ENCODE measurements at regions of chr11 and their contacts with region 1.

Region 1: DNA sequence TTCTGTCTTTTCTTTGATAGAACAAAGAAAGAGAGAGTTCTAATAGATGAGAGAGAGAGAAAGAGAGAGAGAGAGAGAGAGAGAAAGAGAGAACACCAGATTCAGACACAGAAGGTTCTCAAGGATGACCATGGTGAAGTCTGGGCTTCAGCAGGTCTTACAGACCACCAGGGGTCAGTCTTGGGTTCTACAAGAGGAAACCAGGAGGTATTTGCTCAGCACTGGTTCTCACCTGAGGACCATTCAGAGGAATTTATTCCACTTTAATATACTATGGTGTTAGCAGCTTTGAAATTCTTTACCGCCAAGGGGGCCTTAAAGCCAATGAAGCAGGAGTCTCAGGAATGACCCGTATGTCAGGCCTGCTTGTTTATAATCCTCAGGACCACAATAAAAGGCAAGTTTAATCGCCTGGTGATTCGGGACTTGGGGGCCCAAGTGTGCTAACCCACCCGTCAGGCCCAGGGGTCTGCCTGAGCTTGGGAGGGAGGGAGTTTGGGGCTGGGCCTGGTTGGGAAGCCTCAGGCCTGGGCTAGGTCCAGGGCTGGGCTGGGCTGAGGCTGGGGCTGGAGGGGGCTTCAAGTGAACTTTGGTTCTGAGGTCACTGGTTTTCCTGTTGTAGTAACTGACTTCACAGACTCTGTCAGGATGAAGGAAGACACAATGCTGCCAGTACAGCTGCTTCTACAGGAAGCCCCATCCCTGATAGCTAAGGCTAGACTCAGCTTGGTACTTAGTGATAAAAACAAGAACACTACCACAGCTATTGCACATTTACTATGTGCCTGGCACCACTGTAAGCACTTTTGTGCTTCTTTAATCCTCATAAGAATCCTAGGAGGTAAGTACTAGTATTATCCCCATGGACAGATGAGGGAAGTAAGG is 179.2 kb upstream of the ZBED5 start:
- DNase-seq: peak; percentile 59
- H3K4me3 Mint-ChIP-seq: no peak overlapping the region
- H3K27ac Mint-ChIP-seq: no peak overlapping the region
- H3K4me1 Mint-ChIP-seq: peaks cover 8% of the 10 kb centered on the region
- H3K27me3 Mint-ChIP-seq: no peaks in the 10 kb centered on the region

Region 2: GRCh38 chr11:11022125-11022730 is 14.9 kb before region 1 on chr11:
- CTCF ChIA-PET with region 1: interaction called, 40 read pairs
- intact Hi-C with region 1: no loop called
- DNase-seq: peak; percentile 34
- H3K4me3 Mint-ChIP-seq: no peak overlapping the region
- H3K27ac Mint-ChIP-seq: no peak overlapping the region
- H3K4me1 Mint-ChIP-seq: no peaks in the 10 kb centered on the region
- H3K27me3 Mint-ChIP-seq: no peaks in the 10 kb centered on the region

Region 3: GRCh38 chr11:11157185-11157584 is 120.1 kb after region 1 on chr11:
- CTCF ChIA-PET with region 1: interaction called, 37 read pairs
- intact Hi-C with region 1: loop called (anchors 1 kb)
- DNase-seq: peak; percentile 66
- H3K4me3 Mint-ChIP-seq: no peak overlapping the region
- H3K27ac Mint-ChIP-seq: no peak overlapping the region
- H3K4me1 Mint-ChIP-seq: peaks cover 28% of the 10 kb centered on the region
- H3K27me3 Mint-ChIP-seq: no peaks in the 10 kb centered on the region

Region 4: GRCh38 chr11:11265994-11266606 is 229.0 kb after region 1 on chr11:
- CTCF ChIA-PET with region 1: interaction called, 6 read pairs
- intact Hi-C with region 1: loop called (anchors 1 kb)
- DNase-seq: peak; percentile 79
- H3K4me3 Mint-ChIP-seq: no peak overlapping the region
- H3K27ac Mint-ChIP-seq: no peak overlapping the region
- H3K4me1 Mint-ChIP-seq: no peaks in the 10 kb centered on the region
- H3K27me3 Mint-ChIP-seq: no peaks in the 10 kb centered on the region

Measured in activated naive CD4-positive, alpha-beta T cell treated with anti-CD3 and anti-CD28 coated beads for 36 hours (primary cell).